Aorta (tissue), 5 donors: ENCODE measurements at regions of chr6 and their contacts with region 1.

Region 1: GRCh38 chr6:37102279-37103168 is 67.4 kb upstream of the PIM1 start:
- DNase-seq: peak; percentile 94 to 95
- ATAC-seq: peak; percentile 93
- H3K4me3 ChIP-seq: peak overlapping the region; percentile 16 to 29
- H3K27ac ChIP-seq: peak overlapping the region; percentile 62 to 93
- H3K4me1 ChIP-seq: no peaks in the 10 kb centered on the region
- H3K27me3 ChIP-seq: no peaks in the 10 kb centered on the region

Region 2: GRCh38 chr6:37059344-37060206 is 42.9 kb before region 1 on chr6:
- intact Hi-C with region 1: loop called in 1 of 2 experiments (anchors 5 kb)
- DNase-seq: peak; percentile 81 to 84
- ATAC-seq: peak; percentile 74
- H3K4me3 ChIP-seq: no peak overlapping the region
- H3K27ac ChIP-seq: peak overlapping the region in 1 of 2 donors; percentile 39
- H3K4me1 ChIP-seq: no peaks in the 10 kb centered on the region
- H3K27me3 ChIP-seq: no peaks in the 10 kb centered on the region

Region 3: GRCh38 chr6:37381579-37381978 is 279.1 kb after region 1 on chr6:
- intact Hi-C with region 1: no loop called
- DNase-seq: no peak
- ATAC-seq: no peak
- H3K4me3 ChIP-seq: no peak overlapping the region
- H3K27ac ChIP-seq: no peak overlapping the region
- H3K4me1 ChIP-seq: no peaks in the 10 kb centered on the region
- H3K27me3 ChIP-seq: no peaks in the 10 kb centered on the region